ENCODE measurements at regions of chr11 and their contacts with region 1.

Region 1: GRCh38 chr11:67452141-67452952 is at the start of gene GPR152:
- DNase-seq: no peak
- H3K4me3 ChIP-seq: no peak within 1 kb of the TSS
- H3K27ac ChIP-seq: no peak within 1 kb of the TSS
- H3K4me1 ChIP-seq: peaks cover 6% of the 10 kb centered on the region
- H3K27me3 ChIP-seq: no peaks in the 10 kb centered on the region
- CTCF ChIP-seq: no peak
- total RNA-seq, gene GPR152: not detected

Region 2: DNA sequence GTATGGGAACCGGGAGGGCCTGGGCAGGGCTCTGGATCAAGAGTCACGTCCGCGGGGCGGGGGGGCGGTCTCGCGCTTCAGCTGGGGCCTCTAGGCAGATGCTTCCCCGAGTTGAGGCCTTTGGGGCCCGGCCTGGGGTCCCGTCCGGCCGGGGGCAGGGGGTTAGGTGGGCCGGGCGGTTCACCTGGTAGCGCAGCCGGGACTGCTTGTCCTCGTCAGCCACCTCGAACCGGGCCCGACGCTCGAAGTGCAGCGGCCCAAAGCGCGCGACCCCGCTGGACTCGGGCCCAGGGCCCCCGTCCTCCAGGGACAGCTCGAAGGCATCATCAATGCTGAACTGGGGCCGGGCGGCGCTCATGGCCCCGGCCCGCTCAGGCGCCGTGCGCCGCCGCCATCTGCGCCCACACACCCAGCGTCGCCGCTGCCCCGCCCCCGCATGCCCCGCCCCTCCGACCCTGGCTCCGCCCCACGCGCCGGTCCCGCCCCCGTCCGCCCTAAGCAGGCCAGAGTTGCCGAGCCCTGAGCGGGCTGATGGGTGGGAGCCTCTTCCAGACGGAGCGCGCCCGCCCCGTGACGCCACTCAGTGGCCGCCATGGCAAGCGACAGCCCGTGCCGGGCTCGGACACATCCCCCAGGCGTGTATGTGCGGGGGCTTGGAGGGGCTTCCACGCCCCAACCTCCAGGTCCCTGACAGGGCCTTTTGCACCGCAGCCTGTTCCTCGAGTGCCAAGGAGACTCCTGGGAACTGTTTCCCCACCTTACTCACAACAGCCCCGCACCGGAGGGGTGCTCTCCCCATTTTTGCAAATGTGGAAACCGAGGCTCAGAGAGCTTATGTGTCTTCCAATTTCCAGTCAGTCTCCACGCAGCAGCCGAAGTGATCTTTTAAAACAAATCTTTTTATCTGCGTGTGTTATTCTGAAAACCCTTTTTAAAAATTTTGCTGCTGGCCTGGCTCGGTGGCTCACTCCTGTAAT is 16.8 kb after region 1 on chr11 and contains the start of gene TMEM134:
- CTCF ChIA-PET with region 1: no interaction called
- dilution Hi-C with region 1: no loop called
- in situ Hi-C with region 1: no loop called
- intact Hi-C with region 1: loop called (anchors 2 kb)
- DNase-seq: peak; percentile 80
- H3K4me3 ChIP-seq: peak within 1 kb of the TSS; percentile 86 to 95 (median 92)
- H3K27ac ChIP-seq: peak within 1 kb of the TSS; percentile 71
- H3K4me1 ChIP-seq: peaks cover 20% of the 10 kb centered on the region
- H3K27me3 ChIP-seq: no peaks in the 10 kb centered on the region
- CTCF ChIP-seq: peak; percentile 24 to 53
- total RNA-seq, gene TMEM134: 55.3 to 69.4 TPM

Region 3: GRCh38 chr11:67482825-67483798 is 30.8 kb after region 1 on chr11 and contains the start of gene AIP:
- CTCF ChIA-PET with region 1: no interaction called
- dilution Hi-C with region 1: loop called (anchors 5 kb)
- in situ Hi-C with region 1: no loop called
- intact Hi-C with region 1: no loop called
- DNase-seq: peak; percentile 96
- H3K4me3 ChIP-seq: peak within 1 kb of the TSS; percentile 56 to 78 (median 73)
- H3K27ac ChIP-seq: peak within 1 kb of the TSS; percentile 66
- H3K4me1 ChIP-seq: peaks cover 12% of the 10 kb centered on the region
- H3K27me3 ChIP-seq: no peaks in the 10 kb centered on the region
- CTCF ChIP-seq: peak; percentile 5 to 34
- total RNA-seq, gene AIP: 34.5 to 36.2 TPM

Measured in mammary epithelial cell (primary cell).